PC-3 (cell line): ENCODE measurements at regions of chr1 and their contacts with region 1.

Region 1: DNA sequence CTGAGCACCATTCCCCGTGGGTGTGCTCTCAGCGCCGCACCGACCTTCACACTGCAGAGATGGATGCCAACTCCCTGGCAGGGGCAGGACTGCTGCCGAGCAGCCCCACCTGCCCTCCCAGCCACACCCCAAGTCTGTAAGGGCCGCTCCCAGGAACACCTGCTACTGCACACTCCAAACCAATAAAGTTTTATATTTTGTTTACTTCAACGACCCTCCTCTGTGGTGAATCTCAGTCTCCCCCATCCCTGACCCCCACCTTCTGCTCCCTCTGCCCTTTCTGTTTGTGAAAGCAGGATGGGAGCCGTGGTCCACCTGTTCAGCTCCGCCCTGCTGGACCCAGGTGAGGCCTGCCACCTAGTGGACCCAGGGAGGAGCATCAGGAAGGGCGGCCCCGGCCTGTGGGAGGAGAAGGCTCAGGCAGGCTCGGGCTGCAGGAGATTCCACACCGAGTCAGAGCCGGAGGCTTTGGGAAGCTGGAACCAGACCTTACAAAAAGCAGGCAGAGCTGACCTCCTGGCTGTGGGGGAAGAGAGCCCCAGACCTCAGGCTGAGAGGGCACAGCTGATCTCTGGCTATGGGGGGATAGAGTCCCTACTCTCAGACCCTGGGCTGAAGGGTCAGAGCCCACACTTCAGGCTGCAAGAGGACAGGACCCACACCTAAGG is 982 bp upstream of the TMEM82 start:
- DNase-seq: peak; percentile 89
- ATAC-seq: peak; percentile 97
- H3K4me3 ChIP-seq: no peak overlapping the region
- H3K27ac ChIP-seq: no peak overlapping the region
- H3K4me1 ChIP-seq: no peaks in the 10 kb centered on the region; the same call in 1 of the 2 replicates
- H3K27me3 ChIP-seq: no peaks in the 10 kb centered on the region
- CTCF ChIP-seq: peak; percentile 94

Region 2: GRCh38 chr1:15559294-15559761 is 182.0 kb before region 1 on chr1:
- CTCF ChIA-PET with region 1: interaction called, 5 read pairs
- POLR2A ChIA-PET with region 1: no interaction called
- intact Hi-C with region 1: loop called (anchors 1 kb)
- DNase-seq: peak; percentile 87
- ATAC-seq: peak; percentile 92
- H3K4me3 ChIP-seq: peak overlapping the region; percentile 53; the same call in 1 of the 2 replicates
- H3K27ac ChIP-seq: peak overlapping the region; percentile 96
- H3K4me1 ChIP-seq: peaks cover 21% of the 10 kb centered on the region
- H3K27me3 ChIP-seq: no peaks in the 10 kb centered on the region
- CTCF ChIP-seq: no peak

Region 3: GRCh38 chr1:15595809-15596617 is 145.3 kb before region 1 on chr1:
- CTCF ChIA-PET with region 1: interaction called, 9 read pairs
- POLR2A ChIA-PET with region 1: no interaction called
- intact Hi-C with region 1: loop called (anchors 1 kb)
- DNase-seq: no peak
- ATAC-seq: no peak
- H3K4me3 ChIP-seq: no peak overlapping the region
- H3K27ac ChIP-seq: no peak overlapping the region
- H3K4me1 ChIP-seq: 0 out of 2 replicates have a peak, but pooled peaks cover under 1% of the 10 kb centered on the region
- H3K27me3 ChIP-seq: no peaks in the 10 kb centered on the region
- CTCF ChIP-seq: no peak